ENCODE measurements at regions of chr6 and their contacts with region 1.

Region 1: GRCh38 chr6:125986300-125987025 is at the start of gene TRMT11:
- DNase-seq: peak; percentile 90
- H3K4me3 Mint-ChIP-seq: peak within 1 kb of the TSS; percentile 9
- H3K27ac Mint-ChIP-seq: no peak within 1 kb of the TSS
- H3K4me1 Mint-ChIP-seq: peaks cover 20% of the 10 kb centered on the region
- H3K27me3 Mint-ChIP-seq: no peaks in the 10 kb centered on the region
- total RNA-seq, gene TRMT11: 42.8 to 46.9 TPM

Region 2: GRCh38 chr6:125301435-125302391 is 684.8 kb before region 1 on chr6 and contains the start of gene HDDC2:
- CTCF ChIA-PET with region 1: no interaction called
- POLR2A ChIA-PET with region 1: interaction called, 5 read pairs
- intact Hi-C with region 1: loop called (anchors 5 kb)
- DNase-seq: peak; percentile 57
- H3K4me3 Mint-ChIP-seq: peak within 1 kb of the TSS; percentile 91
- H3K27ac Mint-ChIP-seq: peak within 1 kb of the TSS; percentile 95
- H3K4me1 Mint-ChIP-seq: peaks cover 54% of the 10 kb centered on the region
- H3K27me3 Mint-ChIP-seq: no peaks in the 10 kb centered on the region
- total RNA-seq, gene HDDC2: 88.9 to 92.3 TPM

Region 3: DNA sequence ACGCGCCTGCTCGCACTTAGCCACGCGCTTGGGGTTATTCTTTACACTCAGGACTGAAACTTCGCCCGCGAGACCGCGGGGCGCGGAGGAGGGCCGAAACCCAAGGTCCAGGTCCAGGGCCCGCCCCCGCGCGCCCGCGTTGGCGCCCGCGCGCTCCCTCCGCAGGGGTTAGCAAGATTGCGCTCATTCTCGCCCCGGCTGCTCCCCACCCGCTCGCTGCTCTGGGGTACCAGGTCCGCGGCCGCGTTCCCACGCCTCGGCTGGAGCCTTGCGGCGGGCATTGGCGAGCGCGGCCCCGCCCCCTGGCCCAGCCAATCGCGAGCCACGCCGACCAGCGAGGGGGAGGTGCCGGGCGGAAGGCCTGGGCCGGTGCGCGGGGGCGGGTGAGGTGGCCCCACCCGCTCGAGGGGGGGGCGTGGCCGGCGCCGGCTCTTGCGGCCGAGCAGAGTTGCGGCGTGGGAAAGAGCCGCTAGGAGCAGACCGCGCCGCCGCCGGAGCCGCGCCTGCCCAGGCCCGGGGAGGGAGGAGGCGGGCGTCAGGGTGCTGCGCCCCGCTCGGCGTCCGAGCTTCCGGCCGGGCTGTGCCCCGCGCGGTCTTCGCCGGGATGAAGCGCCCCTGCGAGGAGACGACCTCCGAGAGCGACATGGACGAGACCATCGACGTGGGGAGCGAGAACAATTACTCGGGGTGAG is 237.1 kb before region 1 on chr6 and contains the start of gene HEY2:
- CTCF ChIA-PET with region 1: interaction called, 3 read pairs
- POLR2A ChIA-PET with region 1: no interaction called
- intact Hi-C with region 1: loop called (anchors 1 kb)
- DNase-seq: peak; percentile 88
- H3K4me3 Mint-ChIP-seq: peak within 1 kb of the TSS; percentile 79
- H3K27ac Mint-ChIP-seq: no peak within 1 kb of the TSS
- H3K4me1 Mint-ChIP-seq: peaks cover 29% of the 10 kb centered on the region
- H3K27me3 Mint-ChIP-seq: peaks cover 67% of the 10 kb centered on the region
- total RNA-seq, gene HEY2: not detected

Region 4: DNA sequence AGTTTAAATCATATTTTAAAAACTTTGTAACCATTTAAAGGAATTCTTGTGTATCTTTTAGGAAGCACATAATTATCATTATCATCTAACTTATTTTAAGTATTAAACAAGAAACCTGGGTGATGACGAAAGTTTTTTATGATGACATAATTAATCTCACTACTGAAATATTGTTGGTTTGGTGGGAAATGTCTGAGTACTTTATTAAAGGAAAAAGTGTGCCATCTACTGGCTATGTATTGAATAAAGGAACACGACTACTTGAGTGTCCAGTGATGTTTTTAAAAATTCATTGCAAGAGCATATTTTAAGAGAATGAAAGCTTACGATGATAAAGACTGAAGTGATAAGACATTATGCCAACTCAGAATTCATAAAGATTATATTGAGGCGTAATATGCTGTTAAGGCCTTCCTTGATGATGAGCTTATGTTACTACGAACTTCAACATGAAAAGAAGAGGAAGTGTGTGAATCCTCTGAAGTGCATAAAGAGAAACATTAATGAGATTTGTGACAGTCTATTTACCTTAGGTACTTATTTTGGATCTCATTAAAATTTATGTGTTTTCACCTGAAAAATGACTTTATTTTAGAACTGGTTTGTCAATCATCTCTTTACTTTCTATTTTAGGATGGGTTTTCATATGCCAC is 12.1 kb before region 1 on chr6:
- CTCF ChIA-PET with region 1: interaction called, 20 read pairs
- POLR2A ChIA-PET with region 1: interaction called, 7 read pairs
- intact Hi-C with region 1: no loop called
- DNase-seq: no peak
- H3K4me3 Mint-ChIP-seq: no peak overlapping the region
- H3K27ac Mint-ChIP-seq: no peak overlapping the region
- H3K4me1 Mint-ChIP-seq: peaks cover 4% of the 10 kb centered on the region
- H3K27me3 Mint-ChIP-seq: no peaks in the 10 kb centered on the region

Region 5: GRCh38 chr6:126245077-126245476 is 258.6 kb after region 1 on chr6:
- CTCF ChIA-PET with region 1: no interaction called
- POLR2A ChIA-PET with region 1: no interaction called
- intact Hi-C with region 1: no loop called
- DNase-seq: no peak
- H3K4me3 Mint-ChIP-seq: no peak overlapping the region
- H3K27ac Mint-ChIP-seq: no peak overlapping the region
- H3K4me1 Mint-ChIP-seq: no peaks in the 10 kb centered on the region
- H3K27me3 Mint-ChIP-seq: no peaks in the 10 kb centered on the region

Region 6: DNA sequence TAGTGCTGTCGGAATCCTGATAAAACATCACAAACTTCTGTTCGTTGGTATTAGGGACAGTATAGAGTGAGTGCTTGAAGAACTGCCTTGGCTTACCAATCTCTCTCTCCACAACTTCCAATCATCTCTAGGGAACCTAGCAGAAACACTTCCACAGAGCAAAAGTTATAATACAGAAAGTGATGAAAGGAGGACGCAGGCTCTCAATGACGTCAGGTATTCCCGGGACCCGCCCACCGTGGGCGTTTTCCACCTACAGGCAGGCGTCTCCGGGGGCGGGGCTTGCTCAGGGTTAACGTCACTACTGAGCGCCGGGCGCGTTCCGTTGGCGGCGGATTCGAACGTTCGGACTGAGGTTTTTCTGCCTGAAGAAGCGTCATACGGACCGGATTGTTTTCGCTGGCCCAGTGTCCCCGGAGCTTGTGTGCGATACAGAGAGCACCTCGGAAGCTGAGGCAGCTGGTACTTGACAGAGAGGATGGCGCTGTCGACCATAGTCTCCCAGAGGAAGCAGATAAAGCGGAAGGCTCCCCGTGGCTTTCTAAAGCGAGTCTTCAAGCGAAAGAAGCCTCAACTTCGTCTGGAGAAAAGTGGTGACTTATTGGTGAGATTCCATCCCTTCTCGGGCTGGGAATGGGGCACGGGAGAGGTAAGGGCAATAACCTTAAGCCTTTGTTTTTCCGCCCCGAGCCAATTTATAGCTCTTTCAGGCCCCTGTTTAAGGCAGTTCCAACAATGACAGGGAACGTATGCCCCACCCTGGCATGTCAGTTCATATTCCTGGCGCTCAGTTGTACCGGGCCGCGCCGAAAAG is 353.5 kb after region 1 on chr6 and contains the start of gene CENPW:
- CTCF ChIA-PET with region 1: interaction called, 4 read pairs
- POLR2A ChIA-PET with region 1: interaction called, 3 read pairs
- intact Hi-C with region 1: loop called (anchors 2 kb)
- DNase-seq: peak; percentile 97
- H3K4me3 Mint-ChIP-seq: no peak within 1 kb of the TSS
- H3K27ac Mint-ChIP-seq: peak within 1 kb of the TSS; percentile 3
- H3K4me1 Mint-ChIP-seq: peaks cover 15% of the 10 kb centered on the region
- H3K27me3 Mint-ChIP-seq: no peaks in the 10 kb centered on the region
- total RNA-seq, gene CENPW: 75.1 to 84.7 TPM

Measured in activated CD4-positive, alpha-beta memory T cell treated with anti-CD3 and anti-CD28 coated beads for 36 hours (primary cell).